PC-3 (cell line): ENCODE measurements at regions of chr10 and their contacts with region 1.

Region 1: GRCh38 chr10:123380497-123381085 is 226.4 kb downstream of the BUB3 start:
- DNase-seq: peak; percentile 69
- ATAC-seq: peak; percentile 39
- H3K4me3 ChIP-seq: 0 out of 2 replicates have a peak overlapping the region, but pooled peaks have one; percentile 14
- H3K27ac ChIP-seq: peak overlapping the region; percentile 65
- H3K4me1 ChIP-seq: peaks cover 39% of the 10 kb centered on the region
- H3K27me3 ChIP-seq: no peaks in the 10 kb centered on the region
- CTCF ChIP-seq: peak; percentile 66

Region 2: GRCh38 chr10:123132576-123133477 is 247.8 kb before region 1 on chr10:
- CTCF ChIA-PET with region 1: no interaction called
- POLR2A ChIA-PET with region 1: no interaction called
- intact Hi-C with region 1: loop called (anchors 1 kb)
- DNase-seq: peak; percentile 84
- ATAC-seq: peak; percentile 65
- H3K4me3 ChIP-seq: peak overlapping the region; percentile 47; the same call in 1 of the 2 replicates
- H3K27ac ChIP-seq: no peak overlapping the region
- H3K4me1 ChIP-seq: peaks cover 23% of the 10 kb centered on the region
- H3K27me3 ChIP-seq: peaks cover 34% of the 10 kb centered on the region
- CTCF ChIP-seq: peak; percentile 77

Region 3: GRCh38 chr10:123154092-123154921 is 226.3 kb before region 1 on chr10 and contains the start of gene BUB3:
- CTCF ChIA-PET with region 1: interaction called, 3 read pairs
- POLR2A ChIA-PET with region 1: no interaction called
- intact Hi-C with region 1: loop called (anchors 2 kb)
- DNase-seq: peak; percentile 97
- ATAC-seq: peak; percentile 94
- H3K4me3 ChIP-seq: peak within 1 kb of the TSS; percentile 100
- H3K27ac ChIP-seq: peak within 1 kb of the TSS; percentile 87
- H3K4me1 ChIP-seq: peaks cover 36% of the 10 kb centered on the region
- H3K27me3 ChIP-seq: no peaks in the 10 kb centered on the region
- CTCF ChIP-seq: no peak
- total RNA-seq, gene BUB3: 271 and 291 TPM in 2 replicates

Region 4: GRCh38 chr10:123272171-123272570 is 108.4 kb before region 1 on chr10:
- CTCF ChIA-PET with region 1: no interaction called
- POLR2A ChIA-PET with region 1: no interaction called
- intact Hi-C with region 1: loop called (anchors 5 kb)
- DNase-seq: peak; percentile 25
- ATAC-seq: no peak
- H3K4me3 ChIP-seq: no peak overlapping the region
- H3K27ac ChIP-seq: no peak overlapping the region
- H3K4me1 ChIP-seq: peaks cover 13% of the 10 kb centered on the region; the same call in 1 of the 2 replicates
- H3K27me3 ChIP-seq: no peaks in the 10 kb centered on the region
- CTCF ChIP-seq: peak; percentile 49

Region 5: DNA sequence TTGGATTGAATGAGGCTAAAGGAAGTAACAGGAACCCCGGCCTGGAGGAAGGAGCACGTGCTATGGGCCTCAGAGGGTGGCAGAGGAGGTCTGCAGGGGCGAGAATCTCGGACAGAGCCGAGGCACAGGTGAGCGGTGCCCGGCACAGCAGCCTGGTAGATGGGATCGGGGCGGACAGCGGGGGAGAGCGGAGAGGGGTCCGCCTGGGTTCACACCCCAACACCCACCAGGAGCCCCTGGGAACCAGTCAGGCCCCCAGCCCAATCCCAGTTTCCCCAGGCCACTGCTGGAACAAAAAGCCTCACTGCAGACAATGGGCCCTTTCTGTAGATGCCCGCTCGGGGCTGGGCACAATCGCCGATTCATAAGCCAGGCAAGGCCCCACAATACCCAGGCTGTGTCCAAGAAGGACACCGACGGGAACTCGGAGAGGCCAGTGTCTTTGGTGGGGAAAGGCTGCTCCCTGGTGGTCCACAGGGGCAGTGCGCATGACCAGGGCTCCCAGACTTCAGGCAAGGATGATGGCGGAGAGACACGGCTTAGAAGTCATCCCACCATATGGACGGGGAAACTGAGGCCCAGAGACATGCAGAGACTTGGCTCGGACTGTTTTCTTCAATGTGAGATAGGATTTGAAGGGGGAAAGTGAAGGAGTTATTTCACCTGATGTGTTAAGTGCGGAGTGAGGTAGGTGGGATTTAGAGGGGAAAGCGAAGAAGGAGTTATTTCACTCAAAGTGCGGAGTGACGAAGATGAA is 178.7 kb after region 1 on chr10:
- CTCF ChIA-PET with region 1: no interaction called
- POLR2A ChIA-PET with region 1: no interaction called
- intact Hi-C with region 1: loop called (anchors 10 kb)
- DNase-seq: peak; percentile 65
- ATAC-seq: peak; percentile 81
- H3K4me3 ChIP-seq: no peak overlapping the region
- H3K27ac ChIP-seq: no peak overlapping the region
- H3K4me1 ChIP-seq: peaks cover 1% of the 10 kb centered on the region; the same call in 1 of the 2 replicates
- H3K27me3 ChIP-seq: peaks cover 5% of the 10 kb centered on the region; the same call in 1 of the 2 replicates
- CTCF ChIP-seq: peak; percentile 90